CD8-positive, alpha-beta memory T cell (primary cell): ENCODE measurements at regions of chr2 and their contacts with region 1.

Region 1: DNA sequence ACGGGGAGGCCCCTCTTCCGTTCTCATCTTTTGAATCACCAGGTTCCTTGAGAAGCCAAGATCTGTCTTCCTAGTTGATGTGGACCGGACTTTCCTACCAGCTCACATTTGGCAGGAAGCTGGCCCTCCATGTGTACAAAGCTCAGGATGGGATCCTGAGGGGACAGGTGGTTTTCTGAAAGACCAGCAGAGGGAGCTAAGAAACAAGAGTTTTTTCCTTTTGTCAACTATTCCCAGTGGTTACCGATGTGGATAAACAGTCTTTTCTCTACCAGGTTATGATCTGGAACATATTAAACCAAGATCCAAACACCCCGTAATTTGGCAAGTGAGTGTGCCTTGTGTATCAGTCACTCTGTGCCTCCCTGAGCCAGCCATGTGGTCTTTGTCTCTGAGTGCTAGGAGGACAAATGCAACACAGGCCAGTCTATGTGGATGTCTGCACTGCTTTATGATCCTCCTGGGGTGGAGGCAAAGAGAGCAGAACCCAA is 25.1 kb upstream of the ARHGAP25 start:
- DNase-seq: no peak
- H3K4me3 ChIP-seq: no peak overlapping the region
- H3K4me3 Mint-ChIP-seq: no peak overlapping the region
- H3K27ac ChIP-seq: no peak overlapping the region
- H3K27ac Mint-ChIP-seq: peak overlapping the region in 3 of 8 donors; percentile 48 to 79 (median 69)
- H3K4me1 ChIP-seq: peaks cover 11% of the 10 kb centered on the region
- H3K4me1 Mint-ChIP-seq: peaks cover 9 to 10% (median 9%) of the 10 kb centered on the region in 3 donors
- H3K27me3 ChIP-seq: no peaks in the 10 kb centered on the region
- H3K27me3 Mint-ChIP-seq: peaks cover 0 to 3% of the 10 kb centered on the region in 2 donors

Region 2: GRCh38 chr2:68467077-68467960 is 242.1 kb before region 1 on chr2 and contains the starts of genes APLF and FBXO48:
- CTCF ChIA-PET with region 1: interaction called, 13 read pairs
- POLR2A ChIA-PET with region 1: no interaction called
- DNase-seq: peak; percentile 96 to 99 (median 99)
- H3K4me3 ChIP-seq: peak within 1 kb of the TSS; percentile 98
- H3K4me3 Mint-ChIP-seq: peak within 1 kb of the TSS; percentile 92 to 99 (median 97)
- H3K27ac ChIP-seq: peak within 1 kb of the TSS; percentile 92
- H3K27ac Mint-ChIP-seq: peak within 1 kb of the TSS; percentile 90 to 99 (median 96)
- H3K4me1 ChIP-seq: peaks cover 25% of the 10 kb centered on the region
- H3K4me1 Mint-ChIP-seq: peaks cover 31 to 56% (median 42%) of the 10 kb centered on the region in 3 donors
- H3K27me3 ChIP-seq: no peaks in the 10 kb centered on the region
- H3K27me3 Mint-ChIP-seq: no peaks in the 10 kb centered on the region
- total RNA-seq, gene APLF: 3.6 to 4.0 TPM
- total RNA-seq, gene FBXO48: 1.5 to 1.6 TPM

Region 3: GRCh38 chr2:68487773-68488355 is 221.6 kb before region 1 on chr2:
- CTCF ChIA-PET with region 1: interaction called, 13 read pairs
- POLR2A ChIA-PET with region 1: no interaction called
- DNase-seq: no peak
- H3K4me3 ChIP-seq: no peak overlapping the region
- H3K4me3 Mint-ChIP-seq: no peak overlapping the region
- H3K27ac ChIP-seq: no peak overlapping the region
- H3K27ac Mint-ChIP-seq: no peak overlapping the region
- H3K4me1 ChIP-seq: no peaks in the 10 kb centered on the region
- H3K4me1 Mint-ChIP-seq: peaks cover 2 to 5% (median 4%) of the 10 kb centered on the region in 3 donors
- H3K27me3 ChIP-seq: no peaks in the 10 kb centered on the region
- H3K27me3 Mint-ChIP-seq: no peaks in the 10 kb centered on the region

Region 4: DNA sequence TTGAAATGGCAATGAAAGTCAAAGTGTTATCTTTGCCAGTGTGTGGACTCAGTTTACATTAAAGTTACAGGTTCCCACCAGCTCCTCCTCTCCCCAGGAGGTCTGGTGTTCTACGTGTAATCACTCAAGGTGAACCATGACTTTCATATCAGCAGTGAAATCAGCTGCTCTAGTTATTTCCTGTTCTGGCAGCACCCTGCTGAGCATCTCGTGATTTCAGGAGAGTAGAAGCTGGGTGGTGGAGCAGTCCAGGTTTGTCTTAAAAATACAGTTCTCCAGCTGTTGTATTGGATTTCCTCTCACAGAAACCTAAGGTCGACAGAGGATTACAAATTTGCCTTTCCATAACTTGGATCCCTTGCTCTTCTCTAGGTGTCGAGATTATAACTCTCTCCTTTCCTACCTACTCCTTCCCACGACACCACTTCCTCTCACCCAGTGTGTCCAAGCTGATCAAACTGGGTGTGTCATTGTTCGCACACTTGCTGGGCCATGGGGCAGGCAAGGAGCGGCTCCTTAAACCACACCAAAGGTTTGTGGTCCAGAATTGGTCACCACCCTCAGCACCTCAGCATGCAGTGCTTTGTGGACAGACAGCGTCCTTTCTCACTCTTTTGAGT is 12.1 kb after region 1 on chr2:
- CTCF ChIA-PET with region 1: interaction called, 11 read pairs
- POLR2A ChIA-PET with region 1: no interaction called
- DNase-seq: peak in 4 of 5 donors; percentile 20 to 69 (median 48)
- H3K4me3 ChIP-seq: peak overlapping the region; percentile 38
- H3K4me3 Mint-ChIP-seq: peak overlapping the region; percentile 42 to 86 (median 79)
- H3K27ac ChIP-seq: peak overlapping the region; percentile 43
- H3K27ac Mint-ChIP-seq: peak overlapping the region; percentile 83 to 99 (median 92)
- H3K4me1 ChIP-seq: peaks cover 82% of the 10 kb centered on the region
- H3K4me1 Mint-ChIP-seq: peaks cover 85 to 98% (median 96%) of the 10 kb centered on the region in 3 donors
- H3K27me3 ChIP-seq: no peaks in the 10 kb centered on the region
- H3K27me3 Mint-ChIP-seq: no peaks in the 10 kb centered on the region

Region 5: DNA sequence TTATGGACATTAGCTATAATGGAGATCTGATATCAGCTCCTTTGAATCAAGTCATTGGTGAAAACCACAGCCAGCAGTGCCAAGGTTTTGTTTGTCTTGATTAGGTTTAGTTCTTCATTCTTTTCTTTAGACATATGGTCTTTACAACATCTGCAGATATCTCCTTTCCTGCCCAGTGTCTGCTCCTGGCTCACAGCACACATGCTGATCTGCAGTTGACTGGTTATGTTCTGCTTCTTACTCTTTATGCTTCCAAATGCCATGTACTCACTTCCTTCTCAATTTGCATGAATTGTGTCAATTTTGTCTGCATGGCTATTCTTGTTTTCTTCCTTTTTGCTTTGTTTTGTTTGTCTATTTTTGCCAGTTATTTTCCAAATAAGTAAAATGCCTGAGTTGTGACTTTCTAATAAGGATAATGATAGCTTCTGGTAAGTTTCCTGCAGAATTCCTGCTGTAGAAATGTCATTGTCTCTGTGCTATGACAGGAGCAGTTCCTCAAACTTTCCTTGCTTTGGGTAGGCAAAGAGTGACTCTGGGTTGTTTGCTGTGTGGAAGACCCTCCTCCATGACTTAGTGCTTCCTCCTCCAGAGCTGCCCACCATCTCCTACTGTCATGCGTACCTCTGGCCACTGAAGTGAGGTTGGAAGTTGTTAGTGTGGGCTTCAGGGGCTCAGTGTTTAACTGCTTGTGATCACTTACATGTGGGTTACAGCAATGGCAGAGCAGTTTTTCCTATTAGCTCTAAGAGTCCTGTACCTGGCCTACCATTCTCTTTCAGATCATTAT is 33.4 kb after region 1 on chr2:
- CTCF ChIA-PET with region 1: interaction called, 10 read pairs
- POLR2A ChIA-PET with region 1: no interaction called
- DNase-seq: no peak
- H3K4me3 ChIP-seq: no peak overlapping the region
- H3K4me3 Mint-ChIP-seq: peak overlapping the region; percentile 30 to 81 (median 72)
- H3K27ac ChIP-seq: no peak overlapping the region
- H3K27ac Mint-ChIP-seq: peak overlapping the region; percentile 58 to 89 (median 80)
- H3K4me1 ChIP-seq: peaks cover 98% of the 10 kb centered on the region
- H3K4me1 Mint-ChIP-seq: peaks cover 90 to 97% (median 96%) of the 10 kb centered on the region in 3 donors
- H3K27me3 ChIP-seq: no peaks in the 10 kb centered on the region
- H3K27me3 Mint-ChIP-seq: no peaks in the 10 kb centered on the region

Region 6: DNA sequence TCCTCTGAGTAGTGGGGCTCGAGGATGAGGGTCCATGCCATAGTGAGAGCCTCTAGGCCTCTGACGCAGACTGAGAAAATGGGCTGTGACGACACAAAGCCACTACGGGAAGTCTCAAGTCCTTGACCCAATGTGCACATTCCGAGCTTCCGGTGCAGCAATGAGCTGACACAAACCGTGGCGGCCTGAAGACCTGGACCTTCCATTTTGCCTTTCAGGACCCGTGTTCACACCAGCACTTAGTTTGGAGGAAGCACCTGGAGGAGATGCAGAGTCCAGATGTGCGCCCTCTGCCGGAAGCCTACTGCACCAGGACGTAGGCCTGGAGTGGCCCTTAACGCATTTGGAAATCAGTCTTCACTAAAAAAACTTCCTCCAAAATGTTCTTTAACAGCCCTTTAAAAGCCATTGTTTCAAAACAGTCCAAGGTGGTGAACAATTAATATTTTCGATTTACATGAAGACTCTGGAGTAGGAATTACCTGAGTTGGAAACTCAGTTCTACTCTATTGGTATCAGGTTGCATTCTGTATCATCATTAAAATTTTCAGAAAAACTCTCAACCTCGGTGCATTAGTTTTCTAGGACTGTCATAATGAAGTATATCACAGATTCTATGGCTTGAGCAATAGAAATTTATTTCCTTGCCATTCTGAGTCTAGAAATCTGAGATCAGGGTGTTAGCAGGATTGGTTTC is 127.8 kb after region 1 on chr2:
- CTCF ChIA-PET with region 1: interaction called, 19 read pairs
- POLR2A ChIA-PET with region 1: no interaction called
- DNase-seq: peak; percentile 36 to 73 (median 48)
- H3K4me3 ChIP-seq: no peak overlapping the region
- H3K4me3 Mint-ChIP-seq: no peak overlapping the region
- H3K27ac ChIP-seq: no peak overlapping the region
- H3K27ac Mint-ChIP-seq: peak overlapping the region in 2 of 8 donors; percentile 51 to 61
- H3K4me1 ChIP-seq: peaks cover 14% of the 10 kb centered on the region
- H3K4me1 Mint-ChIP-seq: peaks cover 14 to 37% (median 16%) of the 10 kb centered on the region in 3 donors
- H3K27me3 ChIP-seq: no peaks in the 10 kb centered on the region
- H3K27me3 Mint-ChIP-seq: no peaks in the 10 kb centered on the region

Region 7: GRCh38 chr2:68909793-68910674 is 200.6 kb after region 1 on chr2:
- CTCF ChIA-PET with region 1: interaction called, 27 read pairs
- POLR2A ChIA-PET with region 1: no interaction called
- DNase-seq: peak; percentile 39 to 74 (median 54)
- H3K4me3 ChIP-seq: no peak overlapping the region
- H3K4me3 Mint-ChIP-seq: peak overlapping the region in 3 of 7 donors; percentile 28 to 42 (median 30)
- H3K27ac ChIP-seq: no peak overlapping the region
- H3K27ac Mint-ChIP-seq: peak overlapping the region; percentile 43 to 90 (median 82)
- H3K4me1 ChIP-seq: peaks cover 58% of the 10 kb centered on the region
- H3K4me1 Mint-ChIP-seq: peaks cover 34 to 39% (median 36%) of the 10 kb centered on the region in 3 donors
- H3K27me3 ChIP-seq: no peaks in the 10 kb centered on the region
- H3K27me3 Mint-ChIP-seq: no peaks in the 10 kb centered on the region